Mucosa of descending colon (tissue), 3 donors: ENCODE measurements at regions of chr12 and their contacts with region 1.

Region 1: DNA sequence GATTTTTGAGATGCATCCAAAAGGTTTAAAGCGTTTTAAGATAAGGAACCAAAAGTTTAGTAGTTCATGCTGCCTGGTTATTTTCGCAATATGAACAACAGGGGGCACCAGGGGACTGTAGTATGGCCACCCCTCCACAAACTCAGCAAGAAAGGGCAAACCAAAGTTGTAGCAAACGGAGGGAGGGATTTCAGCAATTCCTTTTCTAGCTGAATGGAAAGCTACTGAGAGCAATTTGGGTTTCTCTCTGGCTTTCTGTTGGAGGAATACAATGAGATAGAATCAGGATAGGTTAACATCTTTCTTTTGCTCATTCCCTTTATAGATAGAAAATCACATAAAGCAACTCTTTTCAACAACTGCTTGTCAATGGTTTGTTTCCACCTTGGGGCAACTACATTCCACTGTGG is 62.5 kb downstream of the DRAM1 start:
- DNase-seq: peak in 1 of 3 donors; percentile 75
- ATAC-seq: peak; percentile 75
- H3K4me3 ChIP-seq: no peak overlapping the region
- H3K4me1 ChIP-seq: peaks cover 5% of the 10 kb centered on the region
- CTCF ChIP-seq: peak; percentile 26

Region 2: GRCh38 chr12:101470939-101471338 is 468.9 kb before region 1 on chr12:
- intact Hi-C with region 1: no loop called
- DNase-seq: no peak
- ATAC-seq: no peak
- H3K4me3 ChIP-seq: no peak overlapping the region
- H3K4me1 ChIP-seq: no peaks in the 10 kb centered on the region
- CTCF ChIP-seq: no peak

Region 3: GRCh38 chr12:102484428-102484958 is 544.6 kb after region 1 on chr12:
- intact Hi-C with region 1: loop called in 1 of 2 experiments (anchors 10 kb)
- DNase-seq: peak in 2 of 3 donors; percentile 30 to 64
- ATAC-seq: peak; percentile 64
- H3K4me3 ChIP-seq: no peak overlapping the region
- H3K4me1 ChIP-seq: no peaks in the 10 kb centered on the region
- CTCF ChIP-seq: peak; percentile 73